H1 (cell line): ENCODE measurements at regions of chr5 and their contacts with region 1.

Region 1: GRCh38 chr5:151686674-151687407 is at the start of gene SPARC:
- DNase-seq: peak; percentile 56 to 77
- H3K4me3 ChIP-seq: peak within 1 kb of the TSS; percentile 64 to 79 (median 72)
- H3K27ac ChIP-seq: no peak within 1 kb of the TSS
- H3K4me1 ChIP-seq: peaks cover 3 to 23% (median 15%) of the 10 kb centered on the region in 4 experiments
- H3K27me3 ChIP-seq: no peaks in the 10 kb centered on the region
- CTCF ChIP-seq: no peak
- EP300 ChIP-seq: no peak
- POLR2A ChIP-seq: peak; percentile 27 to 94
- RAD21 ChIP-seq: no peak; a peak in 1 of 4 replicates
- total RNA-seq, gene SPARC: 438 and 452 TPM in 2 replicates

Region 2: DNA sequence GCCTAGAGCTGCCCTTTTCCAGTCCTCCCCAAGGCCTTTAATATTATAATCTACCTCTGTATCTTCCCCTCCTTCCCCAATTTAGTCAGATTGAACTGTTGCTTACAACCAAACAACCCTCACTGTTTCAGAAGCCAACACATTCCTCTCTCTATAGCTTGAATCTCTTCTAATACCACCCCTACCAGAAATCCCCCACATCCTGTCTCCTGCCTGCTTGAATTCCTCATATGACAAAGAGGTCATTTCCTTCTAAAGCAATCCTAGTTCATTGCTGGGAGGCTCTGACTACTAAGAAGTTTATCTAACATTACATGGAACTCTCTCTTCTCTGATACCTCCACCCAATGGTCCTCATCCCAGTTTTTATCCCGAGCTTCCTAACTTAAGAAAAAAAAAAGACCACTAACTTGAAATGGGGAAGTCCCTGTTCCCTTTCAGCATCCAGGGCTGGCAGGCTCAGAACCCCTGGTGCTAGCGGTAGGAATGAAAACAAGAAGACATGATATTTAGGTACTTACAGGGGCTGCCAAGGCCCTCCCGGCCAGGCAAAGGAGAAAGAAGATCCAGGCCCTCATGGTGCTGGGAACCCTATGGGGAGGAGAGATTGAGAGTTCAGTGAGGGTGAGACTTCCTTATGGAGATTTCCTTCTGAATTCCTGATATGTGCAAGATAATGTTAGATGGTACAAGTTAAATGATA is 11.1 kb before region 1 on chr5:
- CTCF ChIA-PET with region 1: interaction called, 58 read pairs
- POLR2A ChIA-PET with region 1: interaction called, 16 read pairs
- DNase-seq: no peak
- H3K4me3 ChIP-seq: no peak overlapping the region
- H3K27ac ChIP-seq: no peak overlapping the region
- H3K4me1 ChIP-seq: peaks cover 3 to 18% (median 10%) of the 10 kb centered on the region in 4 experiments; a peak in 5 of 7 replicates
- H3K27me3 ChIP-seq: no peaks in the 10 kb centered on the region
- CTCF ChIP-seq: no peak
- EP300 ChIP-seq: no peak
- POLR2A ChIP-seq: no peak
- RAD21 ChIP-seq: no peak